Endothelial cell of umbilical vein (primary cell): ENCODE measurements at regions of chr3 and their contacts with region 1.

Region 1: GRCh38 chr3:64267721-64268604 is 42.7 kb upstream of the PRICKLE2 start:
- DNase-seq: peak; percentile 11
- H3K4me3 ChIP-seq: peak overlapping the region; percentile 14 to 39 (median 35)
- H3K27ac ChIP-seq: no peak overlapping the region
- H3K4me1 ChIP-seq: peaks cover 17% of the 10 kb centered on the region
- H3K27me3 ChIP-seq: peaks cover 7 to 8% of the 10 kb centered on the region in 2 experiments
- CTCF ChIP-seq: no peak
- POLR2A ChIP-seq: no peak

Region 2: DNA sequence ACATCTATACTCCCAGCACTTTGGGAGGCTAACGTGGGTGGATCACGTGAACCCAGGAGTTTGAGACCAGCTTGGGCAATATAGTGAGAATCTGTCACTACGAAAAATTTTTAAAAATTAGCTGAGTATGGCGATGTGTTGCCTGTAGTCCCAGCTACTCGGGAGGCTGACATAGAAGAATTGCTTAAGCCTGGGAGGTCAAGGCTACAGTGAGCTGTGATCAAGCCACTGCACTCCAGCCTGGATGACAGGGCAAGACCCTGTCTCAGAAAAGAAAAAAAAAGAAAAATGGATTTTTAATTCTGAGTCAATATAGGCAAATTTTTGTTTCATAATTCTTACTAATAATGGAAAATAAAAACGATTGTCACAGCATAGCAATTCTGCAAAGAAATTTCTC is 435.6 kb before region 1 on chr3:
- CTCF ChIA-PET with region 1: no interaction called
- POLR2A ChIA-PET with region 1: no interaction called
- dilution Hi-C with region 1: no loop called
- intact Hi-C with region 1: no loop called
- DNase-seq: no peak
- H3K4me3 ChIP-seq: no peak overlapping the region
- H3K27ac ChIP-seq: no peak overlapping the region
- H3K4me1 ChIP-seq: no peaks in the 10 kb centered on the region
- H3K27me3 ChIP-seq: no peaks in the 10 kb centered on the region
- CTCF ChIP-seq: no peak
- POLR2A ChIP-seq: no peak

Region 3: DNA sequence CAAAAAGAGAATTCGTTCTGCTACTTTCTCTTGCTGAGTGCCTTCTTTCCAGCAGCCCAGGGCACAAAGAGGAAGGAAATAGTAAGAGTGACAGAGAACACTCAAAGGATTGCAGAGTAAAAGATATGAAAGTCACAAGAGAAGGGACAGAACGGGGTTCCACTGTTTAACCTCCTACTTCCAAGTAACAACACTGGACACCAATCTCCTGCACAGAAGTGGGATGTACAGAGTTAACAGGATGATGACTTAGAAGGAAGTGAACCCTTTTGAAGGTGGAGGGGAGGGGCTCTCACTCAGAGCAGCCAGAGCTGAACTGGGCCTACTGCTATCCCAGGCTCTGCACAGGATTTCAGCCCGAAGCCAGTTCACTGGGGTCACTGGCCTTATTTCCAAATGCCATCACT is 87.4 kb after region 1 on chr3:
- CTCF ChIA-PET with region 1: interaction called, 5 read pairs
- POLR2A ChIA-PET with region 1: no interaction called
- dilution Hi-C with region 1: no loop called
- intact Hi-C with region 1: loop called (anchors 5 kb)
- DNase-seq: peak; percentile 78
- H3K4me3 ChIP-seq: no peak overlapping the region
- H3K27ac ChIP-seq: peak overlapping the region; percentile 48
- H3K4me1 ChIP-seq: peaks cover 46% of the 10 kb centered on the region
- H3K27me3 ChIP-seq: no peaks in the 10 kb centered on the region
- CTCF ChIP-seq: no peak
- POLR2A ChIP-seq: no peak

Region 4: DNA sequence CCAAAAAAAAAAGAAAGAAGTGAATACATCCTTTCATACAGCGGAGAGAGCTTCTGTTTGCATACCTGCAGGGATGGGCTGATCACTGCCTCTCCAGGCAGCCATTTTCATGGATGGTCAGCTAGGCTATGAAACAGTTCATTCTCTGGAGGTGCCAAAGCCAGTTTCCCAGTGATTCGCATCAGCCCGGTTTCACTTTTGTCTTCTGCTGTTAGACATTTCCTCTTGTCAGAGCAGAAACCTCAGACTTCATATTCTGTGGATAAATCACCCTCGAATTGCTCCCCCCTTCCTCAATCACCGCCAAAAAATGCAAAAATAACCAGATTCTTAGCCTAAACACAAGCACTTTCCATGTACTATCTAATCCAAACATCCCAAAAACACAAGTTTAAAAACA is 194.2 kb after region 1 on chr3:
- CTCF ChIA-PET with region 1: no interaction called
- POLR2A ChIA-PET with region 1: no interaction called
- dilution Hi-C with region 1: no loop called
- intact Hi-C with region 1: loop called (anchors 10 kb)
- DNase-seq: no peak
- H3K4me3 ChIP-seq: no peak overlapping the region
- H3K27ac ChIP-seq: no peak overlapping the region
- H3K4me1 ChIP-seq: peaks cover 3% of the 10 kb centered on the region
- H3K27me3 ChIP-seq: peaks cover 7 to 9% of the 10 kb centered on the region in 2 experiments
- CTCF ChIP-seq: no peak
- POLR2A ChIP-seq: no peak